ENCODE measurements at regions of chr17 and their contacts with region 1.

Region 1: DNA sequence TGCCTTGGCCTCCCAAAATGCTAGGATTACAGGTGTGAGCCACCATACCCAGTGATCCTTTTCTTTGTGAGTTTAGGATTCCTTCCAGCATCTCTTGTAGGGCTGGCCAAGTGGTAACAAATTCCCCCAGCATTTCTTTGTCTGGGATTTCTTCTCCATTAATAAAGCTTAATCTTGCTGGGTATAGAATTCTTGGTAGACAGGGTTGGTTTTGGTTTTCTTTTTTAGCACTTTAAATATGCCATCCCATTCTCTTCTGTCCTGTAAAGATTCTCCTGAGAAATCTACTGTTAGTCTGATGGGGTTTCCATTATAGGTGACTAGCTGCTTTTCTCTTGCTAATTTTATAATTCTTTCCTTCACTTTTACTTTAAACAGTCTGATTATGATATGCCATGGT is 173.0 kb upstream of the TOM1L1 start:
- DNase-seq: no peak
- H3K4me3 ChIP-seq: no peak overlapping the region
- CTCF ChIP-seq: no peak

Region 2: GRCh38 chr17:54518706-54519105 is 208.9 kb before region 1 on chr17:
- in situ Hi-C with region 1: no loop called
- DNase-seq: no peak
- H3K4me3 ChIP-seq: no peak overlapping the region
- CTCF ChIP-seq: no peak

Region 3: DNA sequence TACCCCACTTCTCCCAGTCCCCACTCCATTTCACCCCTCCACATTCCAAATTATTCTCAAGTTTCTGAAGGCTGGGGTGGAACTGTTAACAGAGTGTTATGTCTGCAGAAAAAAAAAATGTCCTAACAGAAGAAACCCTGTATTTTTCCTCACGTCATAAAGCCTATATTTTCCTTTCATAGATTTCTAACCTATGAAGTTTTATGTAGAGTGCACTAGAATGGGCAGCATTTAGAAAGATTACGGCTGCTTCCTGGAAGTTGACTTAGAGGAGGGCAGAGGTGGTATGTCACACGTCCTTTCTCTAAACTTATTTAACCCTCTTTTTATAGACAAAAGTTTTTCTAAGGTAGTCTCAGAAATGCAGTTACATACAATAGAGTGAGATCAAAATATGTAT is 33.2 kb after region 1 on chr17:
- in situ Hi-C with region 1: no loop called
- DNase-seq: no peak
- H3K4me3 ChIP-seq: no peak overlapping the region
- CTCF ChIP-seq: no peak

Region 4: GRCh38 chr17:54785643-54786268 is 58.1 kb after region 1 on chr17:
- in situ Hi-C with region 1: loop called (anchors 5 kb)
- DNase-seq: no peak
- H3K4me3 ChIP-seq: no peak overlapping the region
- CTCF ChIP-seq: no peak

Region 5: DNA sequence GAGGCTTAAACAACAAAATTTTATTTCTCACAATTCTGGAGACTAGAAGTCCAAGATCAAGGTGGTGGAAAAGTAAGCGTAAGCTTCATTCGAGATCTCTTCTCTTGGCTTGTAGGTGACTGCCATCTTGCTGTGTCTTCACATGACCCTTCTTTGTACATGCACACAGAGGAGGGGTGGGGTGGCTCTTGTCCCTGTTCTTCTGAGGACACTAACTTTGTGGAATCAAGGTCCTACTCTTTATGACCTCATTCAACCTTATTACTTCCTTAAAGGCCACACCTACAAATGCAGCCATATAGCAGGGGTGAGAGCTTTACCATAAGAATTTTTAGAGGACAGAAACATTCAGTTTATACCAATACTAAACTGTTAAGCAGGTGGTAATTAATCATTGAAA is 397.1 kb after region 1 on chr17:
- in situ Hi-C with region 1: no loop called
- DNase-seq: no peak
- H3K4me3 ChIP-seq: no peak overlapping the region
- CTCF ChIP-seq: no peak